ENCODE measurements at regions of chr14 and their contacts with region 1.

Region 1: GRCh38 chr14:75709207-75709812 is 48.3 kb downstream of the TTLL5 start:
- DNase-seq: peak; percentile 49
- H3K4me3 ChIP-seq: no peak overlapping the region
- H3K27ac ChIP-seq: no peak overlapping the region
- H3K4me1 ChIP-seq: peaks cover 19% of the 10 kb centered on the region
- H3K27me3 ChIP-seq: no peaks in the 10 kb centered on the region
- CTCF ChIP-seq: peak; percentile 73 to 87

Region 2: DNA sequence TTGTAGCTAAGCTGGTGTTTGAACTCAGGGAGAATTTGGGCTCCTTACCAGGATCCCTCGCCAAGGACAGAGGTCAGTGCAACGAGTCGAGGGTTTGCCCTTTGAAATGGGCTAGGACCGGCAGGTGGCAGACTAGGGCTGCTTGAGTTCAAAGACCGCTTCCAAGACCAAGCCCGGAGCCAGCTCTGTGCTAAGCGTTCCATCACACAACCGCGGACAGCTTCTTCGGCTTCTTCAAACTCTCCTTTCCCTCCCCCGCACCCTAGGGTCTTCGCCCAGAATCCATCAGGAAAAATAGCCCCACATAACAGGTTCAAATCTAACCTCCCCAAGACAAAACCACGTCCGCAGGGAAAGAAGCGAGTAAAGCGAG is 131.6 kb before region 1 on chr14:
- CTCF ChIA-PET with region 1: interaction called, 7 read pairs
- dilution Hi-C with region 1: no loop called
- in situ Hi-C with region 1: no loop called
- intact Hi-C with region 1: loop called (anchors 1 kb)
- DNase-seq: peak; percentile 66
- H3K4me3 ChIP-seq: peak overlapping the region; percentile 51 to 71 (median 51)
- H3K27ac ChIP-seq: peak overlapping the region; percentile 17
- H3K4me1 ChIP-seq: peaks cover 10% of the 10 kb centered on the region
- H3K27me3 ChIP-seq: no peaks in the 10 kb centered on the region
- CTCF ChIP-seq: peak; percentile 74 to 89

Region 3: DNA sequence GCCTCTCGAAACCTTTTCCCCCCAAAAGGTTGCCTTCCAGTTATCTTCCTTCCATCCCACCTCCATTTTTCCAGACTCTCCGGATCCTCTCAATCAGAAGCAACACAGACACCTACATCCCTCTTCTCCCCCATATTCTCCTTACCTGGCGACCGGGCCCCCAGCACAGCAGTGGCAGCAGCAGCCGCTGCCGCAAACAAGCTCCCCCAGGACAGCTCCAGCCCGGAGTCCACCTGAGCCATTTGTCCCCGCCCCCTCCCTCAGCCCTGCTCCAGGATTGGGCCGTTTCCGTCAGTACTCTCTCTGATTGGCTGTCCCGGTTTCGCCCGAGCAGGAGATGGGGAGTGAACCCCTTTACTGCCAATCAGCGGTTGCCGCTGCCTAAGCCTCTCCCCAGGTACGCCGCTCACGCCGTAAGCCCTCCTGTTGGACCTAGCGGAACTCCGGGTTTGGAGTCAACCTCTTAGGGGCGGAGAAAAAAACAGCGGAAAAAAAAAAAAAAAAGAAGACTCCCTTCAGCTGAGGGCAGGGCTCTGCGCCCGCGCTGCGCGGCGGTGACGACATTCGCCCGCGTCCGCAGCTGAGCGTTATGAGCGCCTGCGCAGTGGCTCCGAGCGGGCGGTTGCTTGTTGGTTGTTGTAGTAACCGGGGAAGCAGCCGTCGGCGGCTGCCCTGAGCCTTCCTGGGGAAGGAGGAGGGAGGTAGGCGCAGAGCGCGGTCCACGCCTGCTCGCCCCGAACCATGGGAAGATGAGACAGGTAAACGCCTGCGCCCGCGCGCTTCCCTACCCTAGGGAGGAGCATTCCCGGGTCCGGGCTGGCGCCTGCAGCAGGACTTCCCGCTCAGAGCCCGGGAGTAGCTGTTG is 48.4 kb before region 1 on chr14 and contains the starts of genes ERG28 and TTLL5:
- CTCF ChIA-PET with region 1: no interaction called
- dilution Hi-C with region 1: no loop called
- in situ Hi-C with region 1: no loop called
- intact Hi-C with region 1: loop called (anchors 2 kb)
- DNase-seq: peak; percentile 100
- H3K4me3 ChIP-seq: peak within 1 kb of the TSS; percentile 73 to 97 (median 95)
- H3K27ac ChIP-seq: peak within 1 kb of the TSS; percentile 94
- H3K4me1 ChIP-seq: peaks cover 19% of the 10 kb centered on the region
- H3K27me3 ChIP-seq: no peaks in the 10 kb centered on the region
- CTCF ChIP-seq: no peak
- total RNA-seq, gene ERG28: 9.5 to 26.9 TPM
- total RNA-seq, gene TTLL5: 22.2 to 37.0 TPM

Region 4: DNA sequence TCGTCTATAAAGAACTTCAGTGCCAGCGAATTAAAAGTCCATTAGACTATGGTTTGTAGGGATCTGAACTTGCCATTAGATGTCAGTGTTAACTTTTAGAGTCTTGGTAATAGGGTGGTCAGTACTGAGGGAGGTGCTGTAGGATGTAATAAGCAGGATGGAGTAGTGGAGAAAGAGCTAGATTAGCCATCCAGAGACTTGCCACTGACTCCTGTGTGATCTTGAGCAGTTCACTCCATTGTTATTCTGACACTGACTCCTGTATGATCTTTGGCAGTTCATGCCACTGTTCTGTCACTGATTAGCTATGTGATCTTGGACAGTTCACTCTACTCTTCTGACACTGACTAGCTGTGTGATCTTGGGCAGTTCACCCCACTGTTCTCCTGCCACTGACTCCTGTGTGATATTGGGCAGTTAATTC is 85.3 kb after region 1 on chr14:
- CTCF ChIA-PET with region 1: no interaction called
- dilution Hi-C with region 1: no loop called
- in situ Hi-C with region 1: no loop called
- intact Hi-C with region 1: loop called (anchors 2 kb)
- DNase-seq: peak; percentile 42
- H3K4me3 ChIP-seq: no peak overlapping the region
- H3K27ac ChIP-seq: no peak overlapping the region
- H3K4me1 ChIP-seq: no peaks in the 10 kb centered on the region
- H3K27me3 ChIP-seq: no peaks in the 10 kb centered on the region
- CTCF ChIP-seq: peak; percentile 21 to 43

Region 5: GRCh38 chr14:75906676-75907280 is 197.5 kb after region 1 on chr14:
- CTCF ChIA-PET with region 1: interaction called, 11 read pairs
- dilution Hi-C with region 1: no loop called
- in situ Hi-C with region 1: no loop called
- intact Hi-C with region 1: loop called (anchors 1 kb)
- DNase-seq: peak; percentile 33
- H3K4me3 ChIP-seq: no peak overlapping the region
- H3K27ac ChIP-seq: no peak overlapping the region
- H3K4me1 ChIP-seq: peaks cover 10% of the 10 kb centered on the region
- H3K27me3 ChIP-seq: no peaks in the 10 kb centered on the region
- CTCF ChIP-seq: peak; percentile 82 to 93

Region 6: DNA sequence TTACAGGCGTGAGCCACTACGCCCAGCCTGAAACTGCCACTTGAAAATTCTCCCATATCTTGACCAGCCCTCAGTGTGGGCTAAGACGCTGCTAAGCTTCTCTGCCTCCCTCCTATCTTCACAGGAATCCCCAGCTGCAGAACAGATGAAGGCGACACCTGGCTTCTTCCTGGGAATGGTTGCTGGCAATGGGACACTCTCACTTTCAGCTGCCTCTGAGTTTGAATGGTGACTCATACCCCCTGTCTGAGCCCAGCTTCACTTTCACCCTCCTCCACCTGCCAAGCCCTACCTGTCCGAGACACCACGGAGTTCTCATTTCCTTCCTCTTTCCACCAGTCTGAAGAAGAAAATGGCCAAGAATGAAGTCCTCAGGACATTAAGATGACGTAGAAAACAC is 1033.7 kb after region 1 on chr14:
- CTCF ChIA-PET with region 1: no interaction called
- dilution Hi-C with region 1: no loop called
- in situ Hi-C with region 1: no loop called
- intact Hi-C with region 1: no loop called
- DNase-seq: no peak
- H3K4me3 ChIP-seq: no peak overlapping the region
- H3K27ac ChIP-seq: no peak overlapping the region
- H3K4me1 ChIP-seq: no peaks in the 10 kb centered on the region
- H3K27me3 ChIP-seq: no peaks in the 10 kb centered on the region
- CTCF ChIP-seq: no peak